ENCODE measurements at regions of chr15 and their contacts with region 1.

Region 1: GRCh38 chr15:34987985-34988873 is at the start of gene ZNF770:
- H3K4me3 ChIP-seq: peak within 1 kb of the TSS; percentile 82
- H3K27ac ChIP-seq: peak within 1 kb of the TSS; percentile 82
- H3K4me1 ChIP-seq: peaks cover 3% of the 10 kb centered on the region; the same call in 1 of the 2 replicates
- CTCF ChIP-seq: no peak

Region 2: GRCh38 chr15:34933432-34933975 is 54.7 kb before region 1 on chr15:
- CTCF ChIA-PET with region 1: no interaction called
- POLR2A ChIA-PET with region 1: no interaction called
- H3K4me3 ChIP-seq: no peak overlapping the region
- H3K27ac ChIP-seq: no peak overlapping the region
- H3K4me1 ChIP-seq: no peaks in the 10 kb centered on the region
- CTCF ChIP-seq: no peak

Region 3: DNA sequence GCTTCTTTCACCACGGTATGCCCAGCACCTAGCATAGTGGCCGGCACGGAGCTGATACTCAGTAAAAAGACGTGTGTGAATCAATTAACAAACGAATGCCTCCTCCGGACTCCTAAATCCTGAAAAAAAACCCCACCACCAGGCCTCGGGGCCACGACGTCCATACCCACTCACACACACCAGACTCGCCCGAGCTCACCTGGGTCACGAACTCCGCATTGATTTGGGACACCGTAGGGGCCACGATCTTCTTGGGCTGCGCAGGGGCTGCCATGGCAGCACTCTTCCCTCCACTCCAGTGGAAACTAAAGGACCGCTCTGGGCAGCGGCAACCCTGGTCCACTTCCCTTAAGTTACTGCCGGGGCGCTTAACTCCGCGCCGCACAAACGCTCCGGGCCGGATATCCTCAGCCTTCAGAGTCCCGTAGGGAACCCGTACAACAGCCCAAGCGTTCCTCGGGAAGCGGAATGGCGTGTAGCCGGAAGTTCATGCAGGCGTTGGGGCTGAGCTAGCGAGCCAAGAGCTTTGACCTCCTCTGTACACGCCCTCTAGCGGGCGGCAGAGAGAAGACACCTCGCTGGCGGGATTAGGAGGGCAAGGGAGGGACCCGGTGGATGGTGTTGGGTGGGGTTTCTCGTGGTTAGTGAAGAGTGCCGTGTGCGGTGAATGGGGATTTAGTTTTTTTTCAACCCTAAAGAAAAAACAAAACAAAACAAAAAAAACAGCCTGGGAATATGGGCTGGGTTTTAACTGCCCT is 18.7 kb before region 1 on chr15 and contains the start of gene AQR:
- CTCF ChIA-PET with region 1: interaction called, 3 read pairs
- POLR2A ChIA-PET with region 1: interaction called, 51 read pairs
- H3K4me3 ChIP-seq: peak within 1 kb of the TSS; percentile 97
- H3K27ac ChIP-seq: peak within 1 kb of the TSS; percentile 10
- H3K4me1 ChIP-seq: no peaks in the 10 kb centered on the region
- CTCF ChIP-seq: peak; percentile 72

Region 4: GRCh38 chr15:35007394-35007793 is 19.2 kb after region 1 on chr15:
- CTCF ChIA-PET with region 1: no interaction called
- POLR2A ChIA-PET with region 1: no interaction called
- H3K4me3 ChIP-seq: no peak overlapping the region
- H3K27ac ChIP-seq: no peak overlapping the region
- H3K4me1 ChIP-seq: no peaks in the 10 kb centered on the region
- CTCF ChIP-seq: no peak

Region 5: GRCh38 chr15:35019386-35020083 is 31.3 kb after region 1 on chr15:
- CTCF ChIA-PET with region 1: no interaction called
- POLR2A ChIA-PET with region 1: interaction called, 11 read pairs
- H3K4me3 ChIP-seq: no peak overlapping the region
- H3K27ac ChIP-seq: no peak overlapping the region
- H3K4me1 ChIP-seq: no peaks in the 10 kb centered on the region
- CTCF ChIP-seq: no peak

Region 6: GRCh38 chr15:35319354-35319753 is 331.1 kb after region 1 on chr15:
- CTCF ChIA-PET with region 1: no interaction called
- POLR2A ChIA-PET with region 1: no interaction called
- H3K4me3 ChIP-seq: no peak overlapping the region
- H3K27ac ChIP-seq: no peak overlapping the region
- H3K4me1 ChIP-seq: no peaks in the 10 kb centered on the region
- CTCF ChIP-seq: no peak

Measured in HEK293 (cell line).